ENCODE measurements at regions of chrX and their contacts with region 1.

Region 1: DNA sequence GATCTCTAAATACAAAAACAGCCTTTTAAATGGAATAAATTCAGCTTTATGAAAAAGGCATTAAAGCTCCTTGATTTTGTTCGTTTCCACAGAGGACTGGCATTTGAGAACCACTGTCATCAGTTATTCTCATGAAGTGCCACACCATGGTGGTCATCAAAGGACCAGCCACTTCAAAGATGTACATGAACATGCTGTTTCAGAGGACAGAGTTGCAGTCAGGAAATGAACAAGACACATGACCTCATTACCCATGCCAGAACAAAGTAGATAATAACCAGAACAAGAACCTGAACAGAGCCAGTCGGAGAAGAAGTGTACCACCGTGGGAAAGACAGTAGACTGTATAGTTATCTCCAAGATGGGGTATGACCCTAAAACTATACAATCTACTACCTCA is 122.7 kb upstream of the HSD17B10 start:
- DNase-seq: no peak
- H3K4me3 ChIP-seq: no peak overlapping the region
- H3K27ac ChIP-seq: no peak overlapping the region
- H3K4me1 ChIP-seq: no peaks in the 10 kb centered on the region
- H3K27me3 ChIP-seq: no peaks in the 10 kb centered on the region
- CTCF ChIP-seq: no peak

Region 2: DNA sequence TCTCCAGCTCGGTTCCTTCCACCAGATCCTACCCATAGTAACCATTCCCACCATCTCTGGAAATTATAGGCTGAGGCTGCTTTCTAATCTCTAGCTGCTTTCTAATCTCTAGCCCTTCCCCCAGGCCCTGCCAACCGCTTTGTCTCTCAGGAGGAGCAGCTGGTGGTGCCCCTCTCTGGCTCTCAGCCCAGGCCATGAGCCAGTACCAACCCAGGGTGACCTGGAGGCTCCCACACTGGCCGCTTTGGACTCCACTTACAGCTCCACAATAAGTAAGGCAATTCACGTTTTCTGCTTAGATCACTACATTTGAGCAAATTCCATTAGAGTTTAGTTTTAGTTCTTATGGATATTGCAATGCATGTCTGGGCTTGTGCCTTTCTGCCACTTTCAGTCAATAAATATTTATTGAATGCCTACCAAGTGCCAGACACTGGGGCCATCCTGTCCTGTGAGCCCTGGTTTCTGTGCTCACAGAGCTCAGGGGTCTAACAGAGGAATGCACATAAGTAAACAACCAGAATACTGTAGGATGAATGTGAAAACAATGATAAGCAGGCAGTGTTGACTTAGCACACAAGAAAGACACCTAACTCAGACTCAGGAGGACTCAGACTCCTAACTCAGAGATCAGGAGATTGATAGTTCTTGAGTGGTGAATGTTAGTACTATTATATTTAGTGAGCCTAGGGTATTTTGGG is 173.3 kb before region 1 on chrX:
- CTCF ChIA-PET with region 1: interaction called, 15 read pairs
- POLR2A ChIA-PET with region 1: no interaction called
- intact Hi-C with region 1: no loop called
- DNase-seq: no peak
- H3K4me3 ChIP-seq: no peak overlapping the region
- H3K27ac ChIP-seq: no peak overlapping the region
- H3K4me1 ChIP-seq: no peaks in the 10 kb centered on the region
- H3K27me3 ChIP-seq: no peaks in the 10 kb centered on the region
- CTCF ChIP-seq: no peak

Region 3: GRCh38 chrX:53422086-53422860 is 134.6 kb before region 1 on chrX and contains the start of gene SMC1A:
- CTCF ChIA-PET with region 1: no interaction called
- POLR2A ChIA-PET with region 1: no interaction called
- intact Hi-C with region 1: no loop called
- DNase-seq: peak; percentile 82 to 99
- H3K4me3 ChIP-seq: peak within 1 kb of the TSS; percentile 58
- H3K27ac ChIP-seq: peak within 1 kb of the TSS; percentile 49; the same call in 1 of the 2 replicates
- H3K4me1 ChIP-seq: no peaks in the 10 kb centered on the region
- H3K27me3 ChIP-seq: no peaks in the 10 kb centered on the region
- CTCF ChIP-seq: no peak
- total RNA-seq, gene SMC1A: 114 and 162 TPM in 2 replicates

Region 4: GRCh38 chrX:53743244-53743643 is 186.4 kb after region 1 on chrX:
- CTCF ChIA-PET with region 1: no interaction called
- POLR2A ChIA-PET with region 1: no interaction called
- intact Hi-C with region 1: no loop called
- DNase-seq: no peak
- H3K4me3 ChIP-seq: no peak overlapping the region
- H3K27ac ChIP-seq: no peak overlapping the region
- H3K4me1 ChIP-seq: no peaks in the 10 kb centered on the region
- H3K27me3 ChIP-seq: no peaks in the 10 kb centered on the region
- CTCF ChIP-seq: no peak